Left cardiac atrium (tissue), 4 donors: ENCODE measurements at regions of chr17 and their contacts with region 1.

Region 1: GRCh38 chr17:49851387-49852291 is 3.8 kb upstream of the TAC4 start:
- DNase-seq: peak; percentile 88
- ATAC-seq: peak; percentile 82 to 83

Region 2: DNA sequence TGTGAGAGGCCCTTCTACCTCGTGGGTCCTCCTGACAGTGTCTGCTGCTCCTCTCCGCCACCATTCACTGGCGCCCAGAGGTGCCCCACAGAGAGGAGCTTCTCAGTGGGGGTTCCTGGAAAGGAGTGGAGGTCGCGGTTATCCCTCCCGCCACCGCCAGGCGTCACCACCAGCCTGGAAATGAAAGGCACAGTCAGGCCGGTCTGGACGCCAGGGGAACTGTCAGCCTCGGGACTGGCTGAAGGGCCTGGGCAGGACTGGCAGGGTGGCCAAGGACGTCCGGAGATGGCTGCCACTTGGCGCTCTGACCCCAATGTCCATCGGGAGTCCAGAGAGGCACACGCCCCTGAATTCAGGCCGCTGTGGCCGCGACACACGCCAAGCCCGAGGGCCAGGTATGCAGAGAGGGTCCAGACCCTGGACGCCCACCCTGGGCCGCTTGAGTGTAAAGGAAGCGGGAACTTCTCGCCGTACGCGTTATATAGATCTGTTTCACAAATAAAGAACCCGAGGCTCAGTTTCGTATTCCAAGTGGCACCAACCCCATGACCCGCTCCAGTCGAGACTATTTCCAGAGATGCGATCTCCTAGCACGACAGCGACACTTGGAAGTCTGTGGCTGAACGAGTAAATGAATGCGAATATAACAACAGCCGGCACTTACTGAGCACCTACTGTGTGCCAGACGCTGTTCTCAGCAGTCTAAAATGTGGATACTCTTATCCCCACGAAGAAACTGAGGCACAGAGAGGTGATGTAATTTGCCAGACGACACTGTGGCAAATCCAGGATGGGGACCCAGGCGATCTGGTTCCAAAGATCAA is 283.6 kb before region 1 on chr17:
- intact Hi-C with region 1: loop called (anchors 5 to 10 kb)
- DNase-seq: peak; percentile 91
- ATAC-seq: peak; percentile 81 to 84

Region 3: DNA sequence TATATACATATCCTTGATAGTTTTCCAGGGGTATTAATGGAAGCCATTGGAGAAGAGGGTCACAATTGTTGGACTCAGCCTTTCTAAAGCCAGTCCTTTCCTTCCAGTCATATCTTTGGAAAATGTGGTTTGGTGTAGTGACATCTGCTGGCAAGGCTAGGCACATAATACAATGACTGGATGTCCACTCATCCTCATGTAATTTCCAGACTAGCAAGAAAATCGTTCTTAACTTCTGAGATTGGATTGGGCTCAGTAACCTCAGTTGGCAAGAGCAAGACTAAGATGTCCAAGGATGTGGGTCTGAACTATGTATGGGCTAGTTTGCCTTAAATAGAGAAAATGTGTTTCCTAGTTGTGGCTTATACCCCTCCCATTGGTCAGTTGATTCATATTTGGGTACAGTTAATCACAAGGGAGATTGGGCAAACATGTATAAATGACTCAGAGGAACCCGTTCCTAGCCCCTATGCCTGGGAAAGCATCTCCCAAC is 71.9 kb before region 1 on chr17:
- intact Hi-C with region 1: loop called in 1 of 2 experiments (anchors 5 kb)
- DNase-seq: no peak
- ATAC-seq: peak; percentile 55 to 66